SK-N-SH (cell line): ENCODE measurements at regions of chr7 and their contacts with region 1.

Region 1: DNA sequence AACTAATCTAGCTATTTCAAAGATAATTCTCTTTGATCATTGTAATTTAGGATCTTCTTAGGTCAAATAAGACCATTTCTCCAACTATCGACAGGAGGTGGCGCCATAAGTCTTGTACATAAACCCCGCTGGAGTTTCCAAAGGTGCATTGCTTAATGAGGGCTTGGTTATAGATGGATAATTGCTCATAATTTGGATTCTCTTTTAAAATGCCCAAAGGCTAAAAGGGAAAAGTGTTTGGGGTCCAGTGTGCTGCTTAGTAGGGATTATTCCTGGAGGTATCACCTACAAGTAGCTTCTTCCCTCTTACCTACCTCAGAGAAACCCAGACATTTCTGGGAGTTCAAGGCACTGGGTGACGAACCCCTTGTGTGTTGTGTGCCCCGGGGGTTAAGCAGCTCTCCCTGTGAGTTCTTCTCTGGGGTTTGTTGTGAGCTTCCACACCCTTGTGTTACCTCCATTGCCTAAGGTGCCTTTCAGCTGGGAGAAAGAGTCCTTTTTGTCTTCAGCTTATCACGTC is 75.2 kb downstream of the PAXIP1 start:
- DNase-seq: peak; percentile 68
- H3K4me3 ChIP-seq: peak overlapping the region; percentile 61 to 70
- H3K27ac ChIP-seq: peak overlapping the region in 1 of 2 experiments; percentile 44; a peak in 1 of 4 replicates
- H3K4me1 ChIP-seq: peaks cover 0 to 5% of the 10 kb centered on the region in 2 experiments; a peak in 1 of 4 replicates
- H3K27me3 ChIP-seq: no peaks in the 10 kb centered on the region
- CTCF ChIP-seq: peak; percentile 97
- EP300 ChIP-seq: no peak
- RAD21 ChIP-seq: peak; percentile 96

Region 2: DNA sequence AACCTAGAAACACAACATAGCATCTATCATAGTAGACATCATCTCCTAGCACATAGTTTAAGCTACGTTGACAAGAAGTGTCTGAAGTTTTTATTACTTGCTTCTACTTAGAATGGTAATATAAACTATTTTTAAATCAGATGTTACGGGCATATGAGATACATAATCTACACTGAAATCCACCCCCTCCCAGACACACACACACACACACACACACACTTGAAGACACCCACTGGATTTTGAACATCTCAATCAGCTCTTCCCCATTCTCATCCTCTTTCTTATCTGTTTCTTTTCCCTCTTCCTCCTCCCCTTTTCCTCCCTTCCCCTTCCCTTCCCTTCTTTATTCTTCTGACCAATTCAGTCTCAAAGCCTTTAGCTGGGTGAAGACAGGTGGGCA is 100.7 kb before region 1 on chr7:
- CTCF ChIA-PET with region 1: interaction called, 26 read pairs
- POLR2A ChIA-PET with region 1: no interaction called
- DNase-seq: no peak
- H3K4me3 ChIP-seq: no peak overlapping the region
- H3K27ac ChIP-seq: no peak overlapping the region
- H3K4me1 ChIP-seq: no peaks in the 10 kb centered on the region; a peak in 1 of 4 replicates
- H3K27me3 ChIP-seq: no peaks in the 10 kb centered on the region
- CTCF ChIP-seq: no peak
- EP300 ChIP-seq: no peak
- RAD21 ChIP-seq: no peak

Region 3: DNA sequence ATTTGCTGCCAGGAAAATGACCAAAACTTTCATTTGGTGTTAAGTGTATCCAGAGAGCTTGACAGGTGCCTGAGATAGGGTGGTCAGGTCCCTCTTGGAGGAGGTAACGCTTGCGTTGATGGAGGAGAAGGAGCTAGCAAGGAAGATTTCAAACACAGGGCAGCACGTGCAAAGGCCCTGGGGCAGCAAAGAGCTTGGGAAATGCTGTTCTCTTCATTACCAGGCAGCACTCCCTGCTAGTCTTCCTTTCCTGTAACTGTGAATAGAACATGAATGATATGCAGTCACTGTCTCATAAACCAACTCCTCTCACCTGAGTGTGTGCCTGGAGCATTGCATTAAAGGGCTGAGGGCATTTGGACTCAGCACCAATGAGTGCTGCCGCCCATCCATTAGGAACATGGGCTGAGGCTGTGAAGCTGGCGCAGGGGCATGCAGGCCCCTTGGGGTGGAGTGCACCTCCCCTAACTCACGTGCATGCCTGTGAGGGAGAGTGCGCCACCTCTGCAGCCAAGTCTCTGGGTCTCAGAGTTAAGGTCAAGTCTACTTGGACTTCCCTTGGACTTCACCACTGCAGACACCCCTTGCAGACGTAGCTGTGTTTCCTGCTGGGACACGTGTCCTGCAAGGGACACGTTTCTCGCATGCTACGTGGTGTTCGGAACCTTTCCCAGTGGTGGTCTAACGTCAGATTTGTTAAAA is 61.5 kb before region 1 on chr7:
- CTCF ChIA-PET with region 1: interaction called, 10 read pairs
- POLR2A ChIA-PET with region 1: no interaction called
- DNase-seq: peak; percentile 10
- H3K4me3 ChIP-seq: no peak overlapping the region
- H3K27ac ChIP-seq: no peak overlapping the region
- H3K4me1 ChIP-seq: peaks cover 0 to 6% of the 10 kb centered on the region in 2 experiments; a peak in 2 of 4 replicates
- H3K27me3 ChIP-seq: no peaks in the 10 kb centered on the region
- CTCF ChIP-seq: no peak
- EP300 ChIP-seq: no peak
- RAD21 ChIP-seq: no peak

Region 4: DNA sequence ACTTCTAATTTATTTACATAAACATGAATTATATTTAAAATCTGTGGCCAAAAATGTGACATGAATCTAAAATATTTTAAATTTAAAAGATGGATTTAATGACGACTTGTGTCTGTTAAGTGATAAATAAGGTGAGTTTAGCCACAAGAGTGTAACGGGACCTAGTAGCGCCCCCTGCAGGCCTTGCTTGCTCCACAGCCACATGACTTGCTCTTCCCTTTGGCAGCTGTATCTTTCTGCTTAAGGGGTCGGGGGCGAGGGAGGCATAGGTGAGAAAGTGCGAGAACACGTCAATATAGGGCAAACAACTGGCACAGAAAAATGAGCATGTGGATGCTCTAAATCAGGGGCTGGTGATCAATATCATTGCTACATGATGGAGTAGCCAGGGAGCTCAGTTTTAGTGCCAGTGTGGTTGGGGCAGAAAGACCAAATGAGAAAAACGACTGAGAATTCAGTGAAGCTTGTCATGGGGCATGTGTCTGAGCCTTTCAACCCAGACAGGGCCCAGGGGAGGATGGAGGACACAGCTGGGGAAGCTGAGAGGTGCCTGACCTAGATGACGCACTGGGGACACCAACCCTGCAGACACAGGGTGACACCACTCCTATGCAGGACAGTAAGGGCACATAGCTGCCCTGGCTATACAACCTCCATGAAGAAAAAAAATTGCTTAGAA is 25.5 kb after region 1 on chr7:
- CTCF ChIA-PET with region 1: interaction called, 153 read pairs
- POLR2A ChIA-PET with region 1: no interaction called
- DNase-seq: peak; percentile 63
- H3K4me3 ChIP-seq: no peak overlapping the region; a peak in 1 of 4 replicates
- H3K27ac ChIP-seq: no peak overlapping the region
- H3K4me1 ChIP-seq: no peaks in the 10 kb centered on the region
- H3K27me3 ChIP-seq: no peaks in the 10 kb centered on the region
- CTCF ChIP-seq: peak; percentile 86
- EP300 ChIP-seq: no peak
- RAD21 ChIP-seq: peak; percentile 48

Region 5: GRCh38 chr7:154984601-154985188 is 57.0 kb after region 1 on chr7:
- CTCF ChIA-PET with region 1: interaction called, 18 read pairs
- POLR2A ChIA-PET with region 1: no interaction called
- DNase-seq: peak; percentile 67
- H3K4me3 ChIP-seq: no peak overlapping the region
- H3K27ac ChIP-seq: no peak overlapping the region
- H3K4me1 ChIP-seq: peaks cover 0 to 10% of the 10 kb centered on the region in 2 experiments; a peak in 2 of 4 replicates
- H3K27me3 ChIP-seq: no peaks in the 10 kb centered on the region
- CTCF ChIP-seq: no peak
- EP300 ChIP-seq: peak in 1 of 2 experiments; percentile 43; a peak in 1 of 4 replicates
- RAD21 ChIP-seq: no peak

Region 6: DNA sequence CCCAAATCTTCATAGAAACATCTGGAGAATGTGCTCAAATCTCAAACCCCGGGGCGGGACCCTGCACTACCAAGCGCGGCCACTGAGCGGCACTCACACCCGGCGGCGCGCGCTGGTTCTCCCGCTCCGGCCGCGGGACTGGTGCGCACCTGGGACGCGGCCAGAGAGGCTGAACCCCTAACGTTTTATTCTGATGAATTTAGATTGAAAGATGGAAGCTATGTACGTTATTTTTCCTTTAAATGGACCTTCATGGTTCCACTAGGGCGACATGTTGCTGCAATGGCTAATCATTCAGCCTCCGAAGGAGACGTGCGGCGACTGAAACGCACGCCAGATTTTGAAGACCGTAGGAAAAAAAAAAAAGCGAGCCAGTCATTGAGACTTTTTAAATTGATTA is 263.0 kb after region 1 on chr7:
- CTCF ChIA-PET with region 1: interaction called, 36 read pairs
- POLR2A ChIA-PET with region 1: no interaction called
- DNase-seq: peak; percentile 94
- H3K4me3 ChIP-seq: no peak overlapping the region; a peak in 1 of 4 replicates
- H3K27ac ChIP-seq: no peak overlapping the region
- H3K4me1 ChIP-seq: peaks cover 0 to 2% of the 10 kb centered on the region in 2 experiments; a peak in 1 of 4 replicates
- H3K27me3 ChIP-seq: peaks cover 19% of the 10 kb centered on the region; the same call in 1 of the 2 replicates
- CTCF ChIP-seq: peak; percentile 91
- EP300 ChIP-seq: no peak
- RAD21 ChIP-seq: peak; percentile 92

Region 7: GRCh38 chr7:155380221-155380861 is 452.7 kb after region 1 on chr7:
- CTCF ChIA-PET with region 1: interaction called, 10 read pairs
- POLR2A ChIA-PET with region 1: no interaction called
- DNase-seq: peak; percentile 95
- H3K4me3 ChIP-seq: no peak overlapping the region
- H3K27ac ChIP-seq: no peak overlapping the region
- H3K4me1 ChIP-seq: peaks cover 3 to 4% of the 10 kb centered on the region in 2 experiments; a peak in 1 of 4 replicates
- H3K27me3 ChIP-seq: peaks cover 100% of the 10 kb centered on the region
- CTCF ChIP-seq: peak; percentile 84
- EP300 ChIP-seq: no peak
- RAD21 ChIP-seq: peak; percentile 70